Endothelial cell of umbilical vein (primary cell): ENCODE measurements at regions of chr1 and their contacts with region 1.

Region 1: GRCh38 chr1:226121587-226122400 is 59.3 kb downstream of the H3-3A start:
- DNase-seq: peak; percentile 43
- H3K4me3 ChIP-seq: peak overlapping the region; percentile 22 to 58 (median 49)
- H3K27ac ChIP-seq: no peak overlapping the region
- H3K4me1 ChIP-seq: no peaks in the 10 kb centered on the region
- H3K27me3 ChIP-seq: peaks cover 0 to 2% of the 10 kb centered on the region in 2 experiments
- CTCF ChIP-seq: peak; percentile 68 to 82
- POLR2A ChIP-seq: no peak

Region 2: GRCh38 chr1:225834417-225835329 is 287.1 kb before region 1 on chr1:
- CTCF ChIA-PET with region 1: no interaction called
- POLR2A ChIA-PET with region 1: no interaction called
- dilution Hi-C with region 1: no loop called
- intact Hi-C with region 1: no loop called
- DNase-seq: no peak
- H3K4me3 ChIP-seq: no peak overlapping the region
- H3K27ac ChIP-seq: no peak overlapping the region
- H3K4me1 ChIP-seq: no peaks in the 10 kb centered on the region
- H3K27me3 ChIP-seq: no peaks in the 10 kb centered on the region
- CTCF ChIP-seq: no peak
- POLR2A ChIP-seq: no peak

Region 3: GRCh38 chr1:225896937-225897549 is 224.8 kb before region 1 on chr1:
- CTCF ChIA-PET with region 1: no interaction called
- POLR2A ChIA-PET with region 1: no interaction called
- dilution Hi-C with region 1: no loop called
- intact Hi-C with region 1: no loop called
- DNase-seq: no peak
- H3K4me3 ChIP-seq: no peak overlapping the region
- H3K27ac ChIP-seq: no peak overlapping the region
- H3K4me1 ChIP-seq: peaks cover 7% of the 10 kb centered on the region
- H3K27me3 ChIP-seq: no peaks in the 10 kb centered on the region
- CTCF ChIP-seq: no peak
- POLR2A ChIP-seq: no peak

Region 4: DNA sequence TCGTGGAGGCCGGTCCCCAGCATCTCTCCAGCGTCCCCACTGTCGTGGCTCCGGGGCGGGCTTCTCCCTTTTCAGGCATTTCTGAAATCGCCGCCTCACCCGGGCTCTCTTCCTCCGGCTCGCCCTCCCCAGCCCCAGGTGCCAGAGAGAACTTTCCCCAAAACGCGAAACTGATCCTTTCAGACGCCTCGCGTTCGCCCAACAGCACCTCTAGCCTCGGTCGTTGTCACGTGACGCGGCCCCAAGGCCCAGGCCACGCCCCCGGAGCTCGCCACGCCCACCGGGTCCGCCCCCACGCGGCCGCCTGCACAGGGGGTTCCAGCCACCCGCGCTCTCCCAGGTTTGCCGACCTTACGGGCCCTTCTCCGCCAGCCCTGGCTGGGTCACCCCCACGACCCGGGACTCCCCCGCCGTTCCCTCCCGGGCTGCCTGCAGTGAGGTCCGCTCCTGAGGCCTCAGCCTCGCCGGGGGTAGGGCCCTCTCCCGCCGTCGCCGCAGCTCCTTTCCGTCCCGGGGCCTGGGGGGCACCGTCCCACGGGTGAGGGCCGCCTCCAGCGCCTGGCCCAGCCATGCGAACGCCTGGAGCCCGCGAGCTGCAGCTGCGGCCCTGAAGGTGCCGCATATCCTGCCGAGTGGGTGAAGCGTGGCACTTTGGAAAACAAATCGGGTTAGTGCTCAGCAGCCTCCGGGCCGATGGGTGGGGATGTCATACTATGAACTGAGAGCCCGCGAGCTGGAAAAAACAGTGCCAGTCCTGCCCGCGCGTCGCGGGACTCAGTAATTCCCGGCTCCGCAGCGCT is 38.3 kb before region 1 on chr1:
- CTCF ChIA-PET with region 1: interaction called, 17 read pairs
- POLR2A ChIA-PET with region 1: no interaction called
- dilution Hi-C with region 1: no loop called
- intact Hi-C with region 1: loop called (anchors 1 kb)
- DNase-seq: peak; percentile 78
- H3K4me3 ChIP-seq: peak overlapping the region; percentile 58 to 87 (median 69)
- H3K27ac ChIP-seq: peak overlapping the region; percentile 20
- H3K4me1 ChIP-seq: peaks cover 5% of the 10 kb centered on the region
- H3K27me3 ChIP-seq: no peaks in the 10 kb centered on the region
- CTCF ChIP-seq: no peak
- POLR2A ChIP-seq: peak; percentile 53

Region 5: GRCh38 chr1:226109829-226110248 is 12.0 kb before region 1 on chr1:
- CTCF ChIA-PET with region 1: interaction called, 13 read pairs
- POLR2A ChIA-PET with region 1: interaction called, 4 read pairs
- dilution Hi-C with region 1: no loop called
- intact Hi-C with region 1: loop called (anchors 1 kb)
- DNase-seq: peak; percentile 72
- H3K4me3 ChIP-seq: peak overlapping the region; percentile 60 to 68 (median 63)
- H3K27ac ChIP-seq: peak overlapping the region; percentile 61
- H3K4me1 ChIP-seq: peaks cover 13% of the 10 kb centered on the region
- H3K27me3 ChIP-seq: no peaks in the 10 kb centered on the region
- CTCF ChIP-seq: no peak
- POLR2A ChIP-seq: no peak

Region 6: GRCh38 chr1:226149806-226150205 is 28.0 kb after region 1 on chr1:
- CTCF ChIA-PET with region 1: interaction called, 21 read pairs
- POLR2A ChIA-PET with region 1: no interaction called
- dilution Hi-C with region 1: no loop called
- intact Hi-C with region 1: no loop called
- DNase-seq: no peak
- H3K4me3 ChIP-seq: no peak overlapping the region
- H3K27ac ChIP-seq: no peak overlapping the region
- H3K4me1 ChIP-seq: no peaks in the 10 kb centered on the region
- H3K27me3 ChIP-seq: no peaks in the 10 kb centered on the region
- CTCF ChIP-seq: no peak
- POLR2A ChIP-seq: no peak

Region 7: DNA sequence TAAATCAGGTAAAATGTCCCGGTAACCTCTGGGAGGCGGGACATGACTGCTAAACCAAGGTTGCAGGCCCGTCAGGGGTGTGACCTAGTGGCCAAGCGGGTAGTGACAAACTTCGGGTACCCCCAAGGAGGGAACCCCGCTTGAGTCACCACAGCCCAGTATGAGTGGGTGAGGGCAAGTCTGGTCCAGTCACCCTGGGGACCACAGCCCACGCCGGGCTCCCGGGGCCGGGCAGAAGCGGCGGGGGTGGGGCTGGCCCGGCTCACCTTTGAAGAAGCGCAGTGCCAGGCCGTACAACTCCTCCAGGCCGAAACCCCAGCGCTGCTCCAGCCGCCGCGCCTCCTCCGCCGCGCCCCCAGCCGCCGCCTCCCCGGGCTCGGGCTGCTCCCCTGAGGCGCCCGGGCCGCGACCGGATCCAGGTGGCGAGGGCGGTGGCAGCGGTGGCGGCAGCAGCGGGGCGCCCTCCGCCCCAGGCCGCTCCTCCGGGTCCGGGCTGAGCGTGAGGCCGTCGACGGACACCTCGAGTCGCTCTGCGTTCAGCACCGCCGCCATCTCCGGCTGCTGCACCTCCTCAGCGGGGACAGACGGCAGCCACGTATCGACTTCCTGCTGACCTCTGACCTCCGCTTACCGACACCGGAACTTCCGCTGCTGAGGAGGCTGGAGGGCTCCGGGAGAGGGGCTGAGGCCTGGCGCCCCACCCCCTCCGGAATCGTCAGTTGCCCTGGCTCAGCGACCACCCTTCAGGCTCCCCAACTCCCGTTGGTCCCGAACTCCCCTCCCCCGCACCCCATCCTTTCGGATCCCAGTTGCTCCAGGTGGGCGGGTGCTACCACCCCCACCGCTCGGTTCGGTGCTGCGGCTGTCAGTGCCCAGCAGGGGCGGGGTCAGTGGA is 64.6 kb after region 1 on chr1 and contains the start of gene ACBD3:
- CTCF ChIA-PET with region 1: interaction called, 45 read pairs
- POLR2A ChIA-PET with region 1: no interaction called
- dilution Hi-C with region 1: no loop called
- intact Hi-C with region 1: no loop called
- DNase-seq: peak; percentile 82
- H3K4me3 ChIP-seq: peak within 1 kb of the TSS; percentile 68 to 93 (median 70)
- H3K27ac ChIP-seq: peak within 1 kb of the TSS; percentile 66
- H3K4me1 ChIP-seq: peaks cover 12% of the 10 kb centered on the region
- H3K27me3 ChIP-seq: no peaks in the 10 kb centered on the region
- CTCF ChIP-seq: peak in 1 of 2 donors; percentile 8
- POLR2A ChIP-seq: peak; percentile 84
- total RNA-seq, gene ACBD3: 36.4 and 37.0 TPM in 2 replicates

Region 8: GRCh38 chr1:226201029-226201593 is 79.3 kb after region 1 on chr1:
- CTCF ChIA-PET with region 1: interaction called, 145 read pairs
- POLR2A ChIA-PET with region 1: no interaction called
- dilution Hi-C with region 1: no loop called
- intact Hi-C with region 1: loop called (anchors 1 kb)
- DNase-seq: no peak
- H3K4me3 ChIP-seq: no peak overlapping the region
- H3K27ac ChIP-seq: no peak overlapping the region
- H3K4me1 ChIP-seq: no peaks in the 10 kb centered on the region
- H3K27me3 ChIP-seq: peaks cover 0 to 1% of the 10 kb centered on the region in 2 experiments
- CTCF ChIP-seq: peak in 1 of 2 donors; percentile 40
- POLR2A ChIP-seq: no peak

Region 9: GRCh38 chr1:226268421-226269116 is 146.8 kb after region 1 on chr1:
- CTCF ChIA-PET with region 1: no interaction called
- POLR2A ChIA-PET with region 1: no interaction called
- dilution Hi-C with region 1: no loop called
- intact Hi-C with region 1: no loop called
- DNase-seq: peak; percentile 6
- H3K4me3 ChIP-seq: no peak overlapping the region
- H3K27ac ChIP-seq: peak overlapping the region; percentile 11
- H3K4me1 ChIP-seq: no peaks in the 10 kb centered on the region
- H3K27me3 ChIP-seq: no peaks in the 10 kb centered on the region
- CTCF ChIP-seq: no peak
- POLR2A ChIP-seq: no peak

Region 10: GRCh38 chr1:226407497-226408284 is 285.9 kb after region 1 on chr1 and contains the start of gene PARP1:
- CTCF ChIA-PET with region 1: interaction called, 10 read pairs
- POLR2A ChIA-PET with region 1: no interaction called
- dilution Hi-C with region 1: no loop called
- intact Hi-C with region 1: loop called (anchors 2 kb)
- DNase-seq: peak; percentile 86
- H3K4me3 ChIP-seq: peak within 1 kb of the TSS; percentile 40 to 97 (median 94)
- H3K27ac ChIP-seq: peak within 1 kb of the TSS; percentile 68
- H3K4me1 ChIP-seq: peaks cover 20% of the 10 kb centered on the region
- H3K27me3 ChIP-seq: peaks cover 3 to 5% of the 10 kb centered on the region in 2 experiments
- CTCF ChIP-seq: peak; percentile 43 to 89
- POLR2A ChIP-seq: peak; percentile 60
- total RNA-seq, gene PARP1: 133 and 136 TPM in 2 replicates

Region 11: GRCh38 chr1:226870401-226871279 is 748.8 kb after region 1 on chr1 and contains the start of gene PSEN2:
- CTCF ChIA-PET with region 1: no interaction called
- POLR2A ChIA-PET with region 1: no interaction called
- dilution Hi-C with region 1: no loop called
- intact Hi-C with region 1: no loop called
- DNase-seq: peak; percentile 51
- H3K4me3 ChIP-seq: peak within 1 kb of the TSS; percentile 55 to 65 (median 61)
- H3K27ac ChIP-seq: no peak within 1 kb of the TSS
- H3K4me1 ChIP-seq: peaks cover 16% of the 10 kb centered on the region
- H3K27me3 ChIP-seq: no peaks in the 10 kb centered on the region
- CTCF ChIP-seq: peak in 1 of 2 donors; percentile 27
- POLR2A ChIP-seq: no peak
- total RNA-seq, gene PSEN2: 12.5 and 17.1 TPM in 2 replicates